ENCODE measurements at regions of chr11 and their contacts with region 1.

Region 1: DNA sequence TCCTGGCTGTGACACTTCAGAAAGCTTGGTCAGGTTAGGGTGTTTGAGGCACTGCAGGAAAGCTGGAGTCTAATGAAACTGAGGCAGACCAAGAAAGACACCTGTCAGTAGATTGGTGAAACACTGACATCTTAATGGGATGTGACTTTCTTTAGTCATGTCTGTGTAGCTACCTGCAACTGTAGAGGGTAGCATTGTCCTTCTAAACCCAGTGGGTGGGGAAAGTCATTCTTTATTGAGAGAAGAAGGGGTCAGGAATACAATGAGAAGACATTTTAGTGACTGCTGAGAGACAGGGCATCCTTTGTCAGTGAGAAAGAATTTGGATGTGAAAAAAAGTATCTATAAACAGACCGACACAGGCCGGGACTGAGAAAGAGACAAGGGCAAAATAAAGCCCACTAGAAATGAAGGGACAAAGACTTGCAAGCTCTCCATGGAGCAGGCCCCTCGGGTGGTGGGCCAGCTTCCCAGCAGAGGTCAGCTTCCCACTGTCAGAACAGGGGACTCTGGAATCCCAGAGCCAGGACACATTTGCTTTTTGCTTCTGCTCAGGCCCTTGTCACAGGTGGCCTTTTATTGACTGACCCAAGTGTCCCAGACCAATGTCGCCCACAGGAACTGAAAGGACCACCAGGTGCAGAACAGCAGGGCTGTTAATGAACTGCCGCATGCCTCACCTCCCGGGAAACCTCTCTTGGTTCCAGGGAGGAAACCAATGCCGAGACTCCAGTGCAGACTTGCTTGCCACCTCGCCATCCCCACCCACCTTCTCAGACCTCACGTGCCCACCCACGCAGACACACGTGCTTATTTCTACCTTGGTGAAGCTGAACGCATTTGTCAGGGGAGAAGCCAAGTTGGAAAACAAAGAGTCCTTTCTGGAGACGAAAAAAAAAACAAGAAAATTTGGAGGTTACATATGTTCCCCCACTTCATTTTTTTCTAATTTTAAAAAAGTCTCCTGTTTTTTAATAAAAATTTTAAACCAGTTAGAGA is 212.8 kb downstream of the TENM4 start:
- DNase-seq: no peak
- H3K4me3 ChIP-seq: no peak overlapping the region
- H3K27ac ChIP-seq: no peak overlapping the region
- H3K27me3 ChIP-seq: peaks cover 0 to 11% (median 0%) of the 10 kb centered on the region in 45 donors
- CTCF ChIP-seq: peak in 16 of 56 donors; percentile 8 to 43 (median 16)

Region 2: GRCh38 chr11:79493555-79494171 is 265.6 kb after region 1 on chr11:
- intact Hi-C with region 1: loop called in 1 of 2 experiments (anchors 5 kb)
- DNase-seq: peak in 9 of 10 donors; percentile 12 to 70 (median 51)
- H3K4me3 ChIP-seq: no peak overlapping the region
- H3K27ac ChIP-seq: no peak overlapping the region
- H3K27me3 ChIP-seq: peaks cover 0 to 4% (median 0%) of the 10 kb centered on the region in 45 donors
- CTCF ChIP-seq: peak; percentile 23 to 85 (median 75)